AG04450 (cell line): ENCODE measurements at regions of chr12 and their contacts with region 1.

Region 1: DNA sequence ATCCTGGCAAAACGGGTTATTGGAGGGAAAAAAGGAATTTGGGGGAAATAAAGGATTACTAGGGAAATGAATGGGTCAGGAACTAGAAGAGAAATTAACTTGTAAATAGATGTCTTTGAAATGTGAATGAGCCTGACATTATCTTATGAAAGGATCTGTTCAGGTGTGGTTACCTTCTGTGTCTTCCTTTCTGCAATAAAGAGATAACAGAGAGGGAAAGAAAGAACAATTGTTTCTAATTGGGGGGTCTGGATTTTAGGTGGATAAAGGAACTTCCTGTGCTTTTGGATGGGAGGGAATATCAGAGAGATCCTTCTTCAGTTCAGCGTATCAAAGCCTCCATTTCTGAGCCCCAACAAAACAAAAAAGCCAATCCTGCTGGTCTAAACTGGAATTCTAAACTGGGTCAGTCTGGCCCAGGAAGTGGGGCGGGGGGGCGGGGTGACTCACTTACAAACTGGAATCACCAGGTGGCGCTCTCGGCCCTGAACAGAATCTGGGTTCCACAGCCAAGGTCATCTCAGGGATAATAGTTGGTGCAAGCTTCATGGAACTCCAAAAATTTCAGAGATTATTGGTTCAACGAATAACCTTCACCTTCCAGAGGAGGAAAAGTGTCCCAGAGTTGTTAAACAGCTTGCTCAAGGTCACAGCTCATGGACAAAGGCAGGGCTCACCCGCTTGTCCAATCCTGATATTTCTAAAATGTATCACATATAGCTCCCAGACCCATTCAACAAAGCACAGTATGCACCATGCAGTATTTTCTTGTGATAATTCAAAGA is 15.2 kb upstream of the PEBP1 start:
- DNase-seq: peak; percentile 44
- H3K4me3 ChIP-seq: no peak overlapping the region
- H3K27ac ChIP-seq: no peak overlapping the region
- H3K27me3 ChIP-seq: no peaks in the 10 kb centered on the region
- CTCF ChIP-seq: peak; percentile 76

Region 2: DNA sequence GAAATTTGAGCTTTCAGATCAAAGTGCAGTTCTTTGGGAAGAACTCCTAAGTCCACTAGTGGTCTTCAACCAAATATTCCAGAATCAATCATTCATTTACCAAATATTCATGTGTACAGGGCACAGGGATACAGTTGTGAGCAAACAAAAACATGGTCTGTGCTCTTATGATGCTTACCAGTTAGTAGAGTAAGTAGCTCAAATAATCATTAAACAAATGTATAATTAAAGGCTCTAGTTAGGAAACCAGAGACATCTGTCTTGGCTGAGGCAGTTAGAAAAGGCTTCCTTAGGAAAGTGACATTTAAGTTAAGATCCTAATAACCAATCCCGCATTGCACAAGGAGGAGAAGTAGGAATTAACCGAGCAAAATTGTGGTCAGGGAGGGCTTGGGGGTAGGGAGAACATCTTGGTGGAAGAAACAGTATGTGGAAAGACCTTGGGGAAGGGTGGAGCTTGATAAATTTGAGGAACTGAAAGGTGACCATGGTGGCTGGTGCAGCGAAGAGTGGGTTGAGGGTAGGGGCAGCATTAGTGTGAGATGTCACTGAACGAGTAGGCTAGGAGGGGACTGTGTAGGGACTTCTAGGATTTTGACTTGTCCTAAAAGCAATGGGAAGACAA is 55.2 kb after region 1 on chr12:
- CTCF ChIA-PET with region 1: interaction called, 13 read pairs
- POLR2A ChIA-PET with region 1: no interaction called
- DNase-seq: no peak
- H3K4me3 ChIP-seq: no peak overlapping the region
- H3K27ac ChIP-seq: no peak overlapping the region
- H3K27me3 ChIP-seq: no peaks in the 10 kb centered on the region
- CTCF ChIP-seq: no peak